ENCODE measurements at regions of chr9 and their contacts with region 1.

Region 1: GRCh38 chr9:34376596-34377403 is at the start of gene MYORG:
- DNase-seq: peak; percentile 94
- ATAC-seq: peak; percentile 85
- H3K4me3 Mint-ChIP-seq: peak within 1 kb of the TSS; percentile 93
- H3K27ac Mint-ChIP-seq: peak within 1 kb of the TSS; percentile 75
- H3K4me1 Mint-ChIP-seq: peaks cover 42% of the 10 kb centered on the region
- H3K27me3 Mint-ChIP-seq: peaks cover 2% of the 10 kb centered on the region
- CTCF ChIP-seq: no peak
- total RNA-seq, gene MYORG: 0.24 and 0.27 TPM in 2 replicates

Region 2: GRCh38 chr9:33924978-33925797 is 451.6 kb before region 1 on chr9:
- CTCF ChIA-PET with region 1: no interaction called
- POLR2A ChIA-PET with region 1: no interaction called
- intact Hi-C with region 1: loop called (anchors 1 kb)
- DNase-seq: no peak
- ATAC-seq: peak; percentile 31
- H3K4me3 Mint-ChIP-seq: no peak overlapping the region
- H3K27ac Mint-ChIP-seq: no peak overlapping the region
- H3K4me1 Mint-ChIP-seq: no peaks in the 10 kb centered on the region
- H3K27me3 Mint-ChIP-seq: no peaks in the 10 kb centered on the region
- CTCF ChIP-seq: no peak

Region 3: DNA sequence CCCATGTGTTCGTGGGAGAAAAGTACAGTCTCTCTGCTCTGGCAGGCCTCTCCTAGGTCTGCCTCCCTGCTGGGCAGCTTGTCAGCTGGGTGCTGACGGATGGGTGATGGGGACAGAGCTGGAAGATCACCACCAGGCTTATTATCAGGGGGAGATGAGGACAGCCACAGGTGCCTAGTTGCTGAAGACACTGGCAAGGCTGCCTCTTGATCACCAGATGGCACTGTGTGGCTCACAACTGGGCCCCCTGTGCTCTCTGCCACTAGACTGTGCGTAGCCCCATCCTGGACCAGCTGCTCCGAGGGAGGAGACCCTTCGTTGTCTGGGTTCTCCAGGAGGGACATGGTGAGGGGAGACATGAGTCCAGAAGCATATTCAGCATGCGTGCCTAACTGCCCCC is 120.7 kb before region 1 on chr9:
- CTCF ChIA-PET with region 1: interaction called, 4 read pairs
- POLR2A ChIA-PET with region 1: interaction called, 3 read pairs
- intact Hi-C with region 1: loop called (anchors 1 kb)
- DNase-seq: no peak
- ATAC-seq: peak; percentile 45
- H3K4me3 Mint-ChIP-seq: no peak overlapping the region
- H3K27ac Mint-ChIP-seq: no peak overlapping the region
- H3K4me1 Mint-ChIP-seq: peaks cover 15% of the 10 kb centered on the region
- H3K27me3 Mint-ChIP-seq: no peaks in the 10 kb centered on the region
- CTCF ChIP-seq: no peak

Region 4: GRCh38 chr9:34437006-34437925 is 60.5 kb after region 1 on chr9:
- CTCF ChIA-PET with region 1: no interaction called
- POLR2A ChIA-PET with region 1: no interaction called
- intact Hi-C with region 1: no loop called
- DNase-seq: no peak
- ATAC-seq: peak; percentile 85
- H3K4me3 Mint-ChIP-seq: no peak overlapping the region
- H3K27ac Mint-ChIP-seq: no peak overlapping the region
- H3K4me1 Mint-ChIP-seq: no peaks in the 10 kb centered on the region
- H3K27me3 Mint-ChIP-seq: no peaks in the 10 kb centered on the region
- CTCF ChIP-seq: no peak

Region 5: GRCh38 chr9:34522971-34523797 is 146.4 kb after region 1 on chr9 and contains the start of gene ENHO:
- CTCF ChIA-PET with region 1: no interaction called
- POLR2A ChIA-PET with region 1: no interaction called
- intact Hi-C with region 1: loop called (anchors 1 kb)
- DNase-seq: peak; percentile 93
- ATAC-seq: peak; percentile 98
- H3K4me3 Mint-ChIP-seq: peak within 1 kb of the TSS; percentile 66
- H3K27ac Mint-ChIP-seq: no peak within 1 kb of the TSS
- H3K4me1 Mint-ChIP-seq: peaks cover 9% of the 10 kb centered on the region
- H3K27me3 Mint-ChIP-seq: peaks cover 19% of the 10 kb centered on the region
- CTCF ChIP-seq: no peak
- total RNA-seq, gene ENHO: not detected in 2 replicates

Region 6: GRCh38 chr9:34665381-34666250 is 288.8 kb after region 1 on chr9:
- CTCF ChIA-PET with region 1: no interaction called
- POLR2A ChIA-PET with region 1: no interaction called
- intact Hi-C with region 1: loop called (anchors 1 kb)
- DNase-seq: peak; percentile 75
- ATAC-seq: peak; percentile 90
- H3K4me3 Mint-ChIP-seq: peak overlapping the region; percentile 88
- H3K27ac Mint-ChIP-seq: peak overlapping the region; percentile 87
- H3K4me1 Mint-ChIP-seq: peaks cover 11% of the 10 kb centered on the region
- H3K27me3 Mint-ChIP-seq: no peaks in the 10 kb centered on the region
- CTCF ChIP-seq: no peak